ENCODE measurements at regions of chr22 and their contacts with region 1.

Region 1: GRCh38 chr22:37544955-37545699 is 15.2 kb upstream of the CDC42EP1 start:
- DNase-seq: peak; percentile 69 to 82 (median 75)
- H3K4me3 ChIP-seq: peak overlapping the region; percentile 21
- H3K27ac ChIP-seq: peak overlapping the region; percentile 93 to 94
- H3K4me1 ChIP-seq: peaks cover 19% of the 10 kb centered on the region
- H3K27me3 ChIP-seq: no peaks in the 10 kb centered on the region
- CTCF ChIP-seq: peak in 2 of 3 donors; percentile 34 to 57
- EP300 ChIP-seq: no peak
- POLR2A ChIP-seq: no peak

Region 2: DNA sequence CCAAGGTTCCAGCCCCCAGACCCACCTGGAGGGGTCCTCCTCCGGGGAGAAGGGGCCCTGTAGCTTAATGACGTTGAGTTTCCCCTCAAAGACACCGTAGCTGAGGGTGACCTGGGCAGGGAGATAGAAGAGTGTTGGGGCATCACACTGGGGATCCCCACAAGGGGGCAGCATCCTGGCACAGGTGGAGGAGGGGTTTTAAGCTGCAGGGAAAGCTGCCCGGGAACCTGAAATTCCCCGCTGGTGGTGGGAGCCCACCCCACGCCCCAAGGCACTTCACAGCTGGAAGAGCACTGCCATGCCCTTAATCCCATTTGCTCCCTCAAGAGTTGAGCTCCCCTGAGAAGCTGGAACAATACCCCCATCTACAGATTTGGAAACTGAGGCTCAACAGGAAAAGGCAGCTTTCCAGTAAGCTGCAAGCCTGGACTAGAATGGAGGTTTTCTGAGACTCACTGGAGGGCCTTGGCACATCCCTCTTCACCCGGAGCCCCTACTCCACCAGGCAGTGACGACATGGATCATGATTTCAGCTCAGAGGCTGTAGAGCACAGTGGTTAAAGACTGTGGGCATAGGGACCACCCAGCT is 72.6 kb before region 1 on chr22:
- intact Hi-C with region 1: no loop called
- DNase-seq: no peak
- H3K4me3 ChIP-seq: no peak overlapping the region
- H3K27ac ChIP-seq: no peak overlapping the region
- H3K4me1 ChIP-seq: no peaks in the 10 kb centered on the region
- H3K27me3 ChIP-seq: no peaks in the 10 kb centered on the region
- CTCF ChIP-seq: no peak
- EP300 ChIP-seq: no peak
- POLR2A ChIP-seq: no peak

Region 3: GRCh38 chr22:37561212-37562048 is 16.3 kb after region 1 on chr22:
- intact Hi-C with region 1: loop called in 3 of 4 experiments (anchors 2 kb)
- DNase-seq: peak; percentile 94 to 98 (median 98)
- H3K4me3 ChIP-seq: peak overlapping the region; percentile 61
- H3K27ac ChIP-seq: peak overlapping the region; percentile 99
- H3K4me1 ChIP-seq: peaks cover 13% of the 10 kb centered on the region
- H3K27me3 ChIP-seq: no peaks in the 10 kb centered on the region
- CTCF ChIP-seq: peak; percentile 87 to 93 (median 92)
- EP300 ChIP-seq: no peak
- POLR2A ChIP-seq: peak; percentile 70

Region 4: GRCh38 chr22:37566903-37567820 is 22.0 kb after region 1 on chr22:
- intact Hi-C with region 1: loop called in 3 of 4 experiments (anchors 2 kb)
- DNase-seq: peak; percentile 71 to 89 (median 87)
- H3K4me3 ChIP-seq: no peak overlapping the region
- H3K27ac ChIP-seq: peak overlapping the region in 1 of 2 donors; percentile 25
- H3K4me1 ChIP-seq: peaks cover 17% of the 10 kb centered on the region
- H3K27me3 ChIP-seq: no peaks in the 10 kb centered on the region
- CTCF ChIP-seq: peak; percentile 87 to 96 (median 92)
- EP300 ChIP-seq: no peak
- POLR2A ChIP-seq: no peak

Region 5: DNA sequence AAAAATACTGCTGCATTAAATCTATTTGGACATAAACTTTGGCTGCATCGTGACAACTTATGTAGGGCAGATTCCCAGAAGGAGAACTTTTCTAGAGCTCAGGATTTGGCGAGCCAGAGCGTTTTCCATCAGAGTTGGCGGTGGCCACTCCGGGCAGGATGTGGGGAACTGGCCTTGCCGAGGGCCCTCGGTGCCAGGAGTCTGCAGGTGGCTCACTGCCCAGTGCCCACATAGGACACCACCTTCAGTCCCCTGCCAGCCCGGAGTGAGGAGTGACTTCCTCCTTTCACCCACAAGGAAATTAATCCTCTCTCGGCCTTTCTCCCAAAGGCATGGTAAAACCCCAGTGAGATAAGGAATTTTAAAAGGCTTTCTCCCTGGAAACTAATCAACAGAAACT is 36.4 kb after region 1 on chr22:
- intact Hi-C with region 1: no loop called
- DNase-seq: no peak
- H3K4me3 ChIP-seq: no peak overlapping the region
- H3K27ac ChIP-seq: no peak overlapping the region
- H3K4me1 ChIP-seq: no peaks in the 10 kb centered on the region
- H3K27me3 ChIP-seq: no peaks in the 10 kb centered on the region
- CTCF ChIP-seq: no peak
- EP300 ChIP-seq: no peak
- POLR2A ChIP-seq: no peak

Region 6: GRCh38 chr22:37599153-37599552 is 54.0 kb after region 1 on chr22:
- intact Hi-C with region 1: loop called in 1 of 4 experiments (anchors 10 kb)
- DNase-seq: no peak
- H3K4me3 ChIP-seq: no peak overlapping the region
- H3K27ac ChIP-seq: no peak overlapping the region
- H3K4me1 ChIP-seq: no peaks in the 10 kb centered on the region
- H3K27me3 ChIP-seq: no peaks in the 10 kb centered on the region
- CTCF ChIP-seq: no peak
- EP300 ChIP-seq: no peak
- POLR2A ChIP-seq: no peak

Region 7: GRCh38 chr22:37716708-37717107 is 171.6 kb after region 1 on chr22:
- intact Hi-C with region 1: no loop called
- DNase-seq: no peak
- H3K4me3 ChIP-seq: no peak overlapping the region
- H3K27ac ChIP-seq: no peak overlapping the region
- H3K4me1 ChIP-seq: no peaks in the 10 kb centered on the region
- H3K27me3 ChIP-seq: no peaks in the 10 kb centered on the region
- CTCF ChIP-seq: no peak
- EP300 ChIP-seq: no peak
- POLR2A ChIP-seq: no peak